ENCODE measurements at regions of chr1 and their contacts with region 1.

Region 1: GRCh38 chr1:34742667-34743270 is 12.1 kb upstream of the GJB5 start:
- DNase-seq: no peak
- H3K4me3 ChIP-seq: no peak overlapping the region
- H3K27me3 ChIP-seq: peaks cover 3% of the 10 kb centered on the region
- CTCF ChIP-seq: peak; percentile 99

Region 2: GRCh38 chr1:34712007-34712688 is 30.6 kb before region 1 on chr1:
- CTCF ChIA-PET with region 1: no interaction called
- POLR2A ChIA-PET with region 1: no interaction called
- DNase-seq: no peak
- H3K4me3 ChIP-seq: no peak overlapping the region
- H3K27me3 ChIP-seq: no peaks in the 10 kb centered on the region
- CTCF ChIP-seq: no peak

Region 3: DNA sequence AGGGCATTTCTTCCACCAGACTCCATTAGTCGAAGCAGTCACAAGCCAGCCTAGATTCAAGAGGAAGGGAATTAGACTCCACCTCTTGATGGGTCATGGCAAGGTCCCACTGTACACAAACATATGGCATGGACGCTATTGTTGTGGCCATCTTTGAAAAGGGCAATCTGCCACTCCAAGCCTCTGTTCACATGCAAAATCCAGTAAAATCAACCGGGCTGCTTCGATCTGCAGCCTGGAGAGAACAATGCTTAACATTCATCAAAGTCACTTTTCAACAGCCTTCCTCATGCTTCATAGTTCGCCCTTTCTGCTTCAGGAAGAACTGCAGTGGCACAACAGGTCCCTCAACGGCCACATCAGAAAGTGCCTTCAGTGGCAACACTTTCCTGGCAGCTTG is 15.9 kb before region 1 on chr1:
- CTCF ChIA-PET with region 1: interaction called, 24 read pairs
- POLR2A ChIA-PET with region 1: no interaction called
- DNase-seq: no peak
- H3K4me3 ChIP-seq: no peak overlapping the region
- H3K27me3 ChIP-seq: no peaks in the 10 kb centered on the region
- CTCF ChIP-seq: no peak

Region 4: GRCh38 chr1:34753163-34753562 is 10.4 kb after region 1 on chr1:
- CTCF ChIA-PET with region 1: interaction called, 19 read pairs
- POLR2A ChIA-PET with region 1: no interaction called
- DNase-seq: no peak
- H3K4me3 ChIP-seq: no peak overlapping the region
- H3K27me3 ChIP-seq: no peaks in the 10 kb centered on the region
- CTCF ChIP-seq: no peak

Region 5: DNA sequence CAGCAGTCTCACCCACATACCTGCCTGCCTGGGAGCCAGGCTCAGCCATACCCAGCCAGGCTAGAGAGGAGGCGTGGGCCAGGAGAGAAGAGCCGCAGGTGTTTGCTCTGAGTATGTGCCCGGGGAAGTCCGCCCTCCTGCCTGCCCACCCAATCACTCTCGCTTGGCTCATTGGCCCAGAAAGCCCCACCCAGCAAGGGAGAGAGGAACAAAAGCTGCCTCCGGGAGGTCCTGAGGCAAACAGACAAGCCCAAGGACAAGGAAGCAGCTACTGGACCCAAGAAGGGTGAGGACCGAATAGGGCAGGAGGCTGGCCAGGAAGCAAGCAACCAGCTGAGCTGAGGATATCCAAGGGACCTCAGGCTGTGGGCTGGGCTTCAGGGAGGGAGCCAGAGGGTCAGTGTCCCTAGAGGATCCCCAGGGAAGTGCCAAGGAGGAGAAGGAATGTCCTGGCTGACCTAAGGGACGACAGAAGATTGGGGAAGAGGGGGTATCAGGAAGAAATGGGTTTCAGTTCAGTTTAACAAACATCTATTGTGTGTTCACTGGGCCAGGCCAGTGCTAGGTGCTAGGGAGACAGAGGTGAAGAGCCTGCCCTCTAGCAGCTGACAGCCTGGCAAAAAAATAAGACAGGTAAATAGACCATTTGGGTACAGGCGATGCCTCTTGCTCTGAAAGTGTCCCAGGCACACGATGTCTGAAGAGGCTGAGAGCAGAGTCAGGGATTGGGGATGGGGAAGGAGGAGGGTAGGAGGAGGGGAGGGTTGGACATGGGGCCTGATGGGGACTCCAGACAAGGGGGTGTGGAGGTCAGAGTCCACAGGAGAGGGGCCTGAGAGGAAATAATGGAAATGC is 17.0 kb after region 1 on chr1 and contains the start of gene GJB4:
- CTCF ChIA-PET with region 1: interaction called, 19 read pairs
- POLR2A ChIA-PET with region 1: no interaction called
- DNase-seq: no peak
- H3K4me3 ChIP-seq: no peak within 1 kb of the TSS
- H3K27me3 ChIP-seq: no peaks in the 10 kb centered on the region; the same call in 1 of the 2 replicates
- CTCF ChIP-seq: no peak
- polyA plus RNA-seq, gene GJB4: not detected in 2 replicates

Region 6: DNA sequence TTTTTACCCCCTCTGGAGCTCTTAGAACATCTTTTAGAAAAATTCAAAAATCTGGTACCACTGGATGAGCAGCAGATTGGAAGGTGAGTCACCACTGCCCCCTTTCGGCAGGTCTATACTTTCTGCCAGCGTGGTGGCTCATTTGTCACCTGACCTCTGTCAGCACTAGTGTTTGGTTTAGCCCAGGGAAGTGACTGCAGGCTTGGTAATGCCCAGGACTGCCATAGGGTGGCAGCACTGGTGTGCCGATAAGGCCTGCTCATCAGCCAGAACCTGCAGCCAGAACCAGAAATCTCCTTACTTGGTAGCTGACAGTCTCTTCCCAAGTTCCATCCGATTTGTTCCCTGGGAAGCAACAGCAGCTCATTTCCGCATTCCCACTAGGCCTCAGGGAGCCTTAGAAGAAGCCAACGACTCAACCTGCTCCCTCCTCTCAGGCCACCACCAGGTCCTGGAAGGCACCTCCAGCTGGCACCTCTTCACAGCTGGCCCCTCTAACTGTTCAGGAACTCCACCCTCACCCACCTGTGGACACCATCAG is 110.0 kb after region 1 on chr1:
- CTCF ChIA-PET with region 1: no interaction called
- POLR2A ChIA-PET with region 1: no interaction called
- DNase-seq: peak; percentile 70
- H3K4me3 ChIP-seq: no peak overlapping the region
- H3K27me3 ChIP-seq: no peaks in the 10 kb centered on the region
- CTCF ChIP-seq: peak; percentile 93

Measured in BJ (cell line).